ENCODE measurements at regions of chr5 and their contacts with region 1.

Region 1: DNA sequence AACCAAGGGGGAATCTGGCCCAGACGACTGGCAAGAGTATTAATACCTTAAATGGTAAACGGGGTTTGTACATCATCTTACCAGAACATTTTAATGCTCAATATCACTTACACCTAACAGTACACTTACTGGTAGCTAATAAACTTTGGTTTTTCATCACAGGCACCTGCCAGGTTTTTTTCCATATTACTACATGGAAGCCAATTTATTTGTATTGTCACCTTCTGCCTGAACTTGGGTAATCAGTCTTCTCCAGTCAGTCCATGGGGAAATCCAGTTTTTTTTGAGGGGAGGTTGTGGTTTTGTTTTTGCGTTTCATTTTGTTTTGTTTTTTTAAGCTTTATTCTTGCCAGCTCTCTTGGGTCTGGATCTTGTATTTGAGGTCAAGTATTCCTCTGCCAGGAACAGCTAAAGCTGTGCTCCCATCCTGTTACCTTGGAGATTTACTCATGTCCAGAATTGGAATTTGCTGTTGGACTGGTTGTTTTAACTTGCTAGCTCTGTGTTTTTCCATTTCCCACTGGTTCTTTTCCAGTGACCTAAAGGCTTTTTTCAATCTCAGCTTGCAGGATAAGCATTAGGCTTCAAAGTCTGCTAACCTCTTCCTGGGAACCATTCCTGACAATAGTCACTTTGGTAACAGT is 11.1 kb upstream of the NADK2 start:
- ATAC-seq: peak in 1 of 8 experiments; percentile 68
- H3K4me3 ChIP-seq: no peak overlapping the region
- H3K27ac ChIP-seq: no peak overlapping the region
- H3K4me1 ChIP-seq: peaks cover 0 to 3% of the 10 kb centered on the region in 2 donors

Region 2: DNA sequence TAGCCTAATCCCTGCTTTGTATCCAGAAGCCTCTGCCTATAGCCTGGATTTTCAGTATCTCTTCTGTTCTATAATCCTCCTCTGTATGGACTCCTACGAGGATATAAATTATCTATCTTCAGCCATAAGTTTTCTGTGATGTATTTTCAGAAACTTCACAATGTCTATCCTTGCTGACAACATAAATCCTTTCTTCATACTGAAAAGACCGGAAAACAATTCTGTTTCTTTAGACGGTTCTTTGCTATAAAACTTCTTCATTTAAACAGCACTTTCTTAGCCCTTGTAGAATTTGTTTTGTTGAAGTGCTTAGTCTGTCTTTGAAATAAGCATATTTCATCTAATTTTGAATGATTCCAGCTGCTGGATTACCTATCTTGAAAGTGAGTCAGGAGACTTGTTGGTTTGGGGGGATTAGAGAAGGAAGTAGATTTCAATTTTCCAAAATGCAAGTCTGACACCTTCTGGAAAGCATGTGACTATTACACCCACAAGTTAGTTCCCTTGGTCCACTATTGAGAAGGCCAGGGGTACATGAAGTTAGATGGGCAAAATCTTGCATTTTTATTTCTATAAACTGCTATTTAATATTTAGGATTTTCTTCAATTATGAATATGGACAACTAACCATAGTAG is 145.2 kb after region 1 on chr5:
- in situ Hi-C with region 1: loop called in 1 of 9 experiments (anchors 25 kb)
- ATAC-seq: peak in 4 of 8 experiments; percentile 47 to 80 (median 54)
- H3K4me3 ChIP-seq: no peak overlapping the region
- H3K27ac ChIP-seq: no peak overlapping the region
- H3K4me1 ChIP-seq: no peaks in the 10 kb centered on the region